Heart left ventricle (tissue), 16 donors: ENCODE measurements at regions of chr18 and their contacts with region 1.

Region 1: DNA sequence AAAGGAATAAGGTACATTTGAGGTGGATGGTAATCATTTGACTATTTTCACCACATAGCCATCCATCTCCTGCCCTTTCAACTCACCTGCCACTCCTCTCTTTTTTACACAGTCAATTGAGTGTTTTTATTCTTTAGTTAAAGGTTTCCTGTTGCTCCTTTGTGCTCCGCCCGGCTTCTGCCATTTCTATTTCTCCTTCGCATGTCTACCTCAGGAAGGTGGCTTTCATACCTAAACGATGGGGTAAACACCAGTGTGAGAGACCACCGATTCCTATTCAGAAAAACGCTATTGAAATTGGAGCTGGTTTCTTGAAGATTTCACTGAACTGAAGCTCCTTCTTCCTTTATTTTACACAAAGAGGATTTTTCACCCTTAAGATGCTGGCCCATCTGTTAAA is 1628.0 kb upstream of the PIK3C3 start:
- DNase-seq: no peak
- ATAC-seq: no peak
- H3K4me3 ChIP-seq: no peak overlapping the region
- H3K27ac ChIP-seq: no peak overlapping the region
- H3K4me1 ChIP-seq: no peaks in the 10 kb centered on the region
- H3K27me3 ChIP-seq: no peaks in the 10 kb centered on the region
- CTCF ChIP-seq: no peak
- POLR2A ChIP-seq: no peak

Region 2: DNA sequence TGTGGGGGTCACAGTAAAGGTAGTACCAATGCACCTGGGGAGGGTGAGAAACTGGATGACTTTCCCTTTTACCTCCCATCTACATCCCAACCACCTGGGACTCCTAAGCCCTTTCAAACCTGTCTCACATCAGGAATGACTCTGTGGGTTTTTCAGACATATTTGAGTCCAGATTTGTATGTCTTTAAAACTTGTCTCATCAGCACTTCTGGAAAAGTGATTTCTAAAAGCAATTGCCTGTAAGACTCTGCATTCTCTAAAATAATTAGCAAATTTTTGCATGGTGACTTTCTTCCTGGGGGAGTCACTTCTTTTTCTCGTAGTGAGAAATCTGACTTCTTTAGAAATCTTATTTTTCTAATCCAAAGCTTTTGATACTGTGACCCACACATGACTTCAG is 75.1 kb after region 1 on chr18:
- intact Hi-C with region 1: no loop called
- DNase-seq: no peak
- ATAC-seq: no peak
- H3K4me3 ChIP-seq: no peak overlapping the region
- H3K27ac ChIP-seq: no peak overlapping the region
- H3K4me1 ChIP-seq: no peaks in the 10 kb centered on the region
- H3K27me3 ChIP-seq: no peaks in the 10 kb centered on the region
- CTCF ChIP-seq: no peak
- POLR2A ChIP-seq: no peak

Region 3: GRCh38 chr18:40553029-40553428 is 226.0 kb after region 1 on chr18:
- intact Hi-C with region 1: loop called in 1 of 10 experiments (anchors 5 kb)
- DNase-seq: no peak
- ATAC-seq: no peak
- H3K4me3 ChIP-seq: no peak overlapping the region
- H3K27ac ChIP-seq: no peak overlapping the region
- H3K4me1 ChIP-seq: no peaks in the 10 kb centered on the region
- H3K27me3 ChIP-seq: no peaks in the 10 kb centered on the region
- CTCF ChIP-seq: no peak
- POLR2A ChIP-seq: no peak